Cardiac septum (tissue), 1 donor: ENCODE measurements at regions of chr1 and their contacts with region 1.

Region 1: GRCh38 chr1:10860682-10861081 is 64.2 kb upstream of the CASZ1 start:
- DNase-seq: no peak

Region 2: DNA sequence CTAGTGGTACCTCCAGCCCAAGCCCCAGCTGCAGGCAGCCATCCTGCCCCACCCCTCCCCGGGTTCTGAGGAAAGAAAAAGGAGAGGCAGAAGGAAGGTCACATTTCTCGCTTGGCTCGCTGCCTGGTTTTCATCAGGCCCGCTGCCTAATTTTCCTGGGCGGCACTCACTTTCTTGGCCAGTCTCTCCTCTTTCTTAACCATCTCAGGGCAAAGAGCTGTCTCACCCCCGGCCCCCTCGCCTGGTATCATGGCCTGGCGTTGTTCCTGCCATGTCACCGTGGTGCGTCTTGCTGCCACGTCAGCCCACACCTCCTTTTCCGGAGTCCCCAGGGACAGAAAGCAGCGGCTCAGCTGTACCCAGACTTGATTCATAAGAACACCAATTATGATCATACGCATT is 37.7 kb before region 1 on chr1:
- intact Hi-C with region 1: loop called (anchors 1 kb)
- DNase-seq: no peak

Region 3: DNA sequence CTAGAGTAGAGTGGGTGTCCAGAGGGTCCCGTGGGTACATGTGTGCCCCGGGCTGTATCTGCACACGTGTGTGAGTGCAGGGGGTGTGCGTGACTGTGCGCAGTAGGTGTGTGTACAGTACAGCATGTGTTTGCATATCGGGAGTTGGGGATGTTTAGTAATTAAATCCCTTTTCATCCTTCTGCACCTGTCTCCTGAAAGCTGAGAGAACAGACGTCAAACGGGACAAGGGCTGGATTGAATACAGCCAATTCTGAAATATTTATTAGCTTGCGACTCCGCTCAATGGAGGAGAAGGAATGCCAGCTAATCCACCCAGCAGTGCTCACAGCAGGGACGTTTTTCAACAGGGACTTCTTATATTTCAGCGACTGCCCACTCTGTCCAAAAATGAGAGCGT is 19.6 kb before region 1 on chr1:
- intact Hi-C with region 1: no loop called
- DNase-seq: no peak

Region 4: GRCh38 chr1:10888286-10888685 is 27.6 kb after region 1 on chr1:
- intact Hi-C with region 1: no loop called
- DNase-seq: no peak